ENCODE measurements at regions of chr1 and their contacts with region 1.

Region 1: DNA sequence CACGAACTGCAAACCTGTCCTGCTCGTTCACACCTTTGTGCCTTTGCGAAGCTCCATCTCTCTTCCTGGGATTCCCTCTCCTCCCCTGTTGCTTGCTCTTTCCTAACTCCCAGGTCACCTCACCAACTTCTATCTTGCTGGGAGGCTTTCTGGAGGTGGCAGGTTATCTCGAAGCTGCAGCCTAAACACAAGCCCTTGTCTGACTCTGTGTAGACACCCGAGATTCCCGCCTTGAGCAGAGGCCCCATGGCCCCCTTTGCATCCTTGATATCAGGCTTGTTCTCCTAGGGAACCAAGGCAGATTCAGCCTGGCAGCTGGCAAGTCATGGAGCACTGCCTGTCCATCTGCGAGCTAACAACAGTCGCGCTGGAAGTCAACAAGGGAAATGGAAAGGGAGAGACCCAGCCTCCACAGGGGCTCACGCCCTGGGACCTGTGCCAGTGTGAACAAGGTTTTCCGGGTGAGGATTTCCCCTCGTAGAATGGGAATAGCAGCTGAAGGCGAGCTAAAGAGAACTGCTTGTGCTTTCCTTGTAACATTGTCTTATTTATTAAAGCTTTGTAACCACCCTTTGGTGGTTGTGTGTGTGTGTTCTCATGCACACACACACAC is 109.5 kb upstream of the JUN start:
- DNase-seq: peak in 1 of 2 donors; percentile 50
- H3K4me3 ChIP-seq: no peak overlapping the region
- H3K27ac ChIP-seq: no peak overlapping the region
- H3K4me1 ChIP-seq: peaks cover 0 to 35% (median 17%) of the 10 kb centered on the region in 4 donors
- H3K27me3 ChIP-seq: no peaks in the 10 kb centered on the region
- CTCF ChIP-seq: no peak

Region 2: GRCh38 chr1:58442114-58442513 is 451.2 kb before region 1 on chr1:
- intact Hi-C with region 1: no loop called
- DNase-seq: no peak
- H3K4me3 ChIP-seq: no peak overlapping the region
- H3K27ac ChIP-seq: no peak overlapping the region
- H3K4me1 ChIP-seq: no peaks in the 10 kb centered on the region
- H3K27me3 ChIP-seq: no peaks in the 10 kb centered on the region
- CTCF ChIP-seq: no peak

Region 3: DNA sequence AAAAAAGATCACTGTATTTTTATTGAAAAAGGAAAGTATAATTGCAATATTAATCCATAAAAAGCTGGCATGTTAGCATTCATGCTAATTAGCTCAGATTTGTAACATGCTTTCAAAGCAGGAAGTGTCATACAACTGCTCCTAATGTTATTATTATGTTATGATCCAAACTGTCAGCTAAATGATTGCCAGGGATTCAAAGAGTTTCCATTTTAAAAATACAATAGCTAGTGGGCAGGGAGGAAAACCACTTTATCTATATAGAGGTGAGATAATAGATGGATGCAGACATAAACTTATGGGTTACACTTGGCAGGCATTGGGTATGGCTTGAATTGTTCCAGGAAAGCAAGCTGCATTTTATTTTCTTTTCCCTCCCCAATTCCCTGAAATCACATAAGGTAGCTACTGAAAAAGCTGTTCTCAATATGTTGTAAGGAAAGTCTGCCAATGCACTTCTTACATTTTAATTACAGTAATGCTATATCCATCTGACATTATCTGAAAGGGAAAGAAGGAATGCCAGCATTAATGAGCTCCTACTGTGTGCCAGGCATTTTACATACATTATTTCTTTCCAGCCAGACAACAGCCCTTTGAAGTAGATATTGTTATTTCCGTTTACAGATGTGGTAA is 183.7 kb before region 1 on chr1:
- intact Hi-C with region 1: no loop called
- DNase-seq: no peak
- H3K4me3 ChIP-seq: no peak overlapping the region
- H3K27ac ChIP-seq: no peak overlapping the region
- H3K4me1 ChIP-seq: no peaks in the 10 kb centered on the region
- H3K27me3 ChIP-seq: no peaks in the 10 kb centered on the region
- CTCF ChIP-seq: no peak

Region 4: GRCh38 chr1:58816072-58816746 is 77.2 kb before region 1 on chr1:
- intact Hi-C with region 1: loop called (anchors 5 kb)
- DNase-seq: peak; percentile 86 to 95
- H3K4me3 ChIP-seq: peak overlapping the region; percentile 62 to 69
- H3K27ac ChIP-seq: peak overlapping the region; percentile 84 to 86
- H3K4me1 ChIP-seq: peaks cover 0 to 35% (median 12%) of the 10 kb centered on the region in 4 donors
- H3K27me3 ChIP-seq: no peaks in the 10 kb centered on the region
- CTCF ChIP-seq: no peak

Region 5: DNA sequence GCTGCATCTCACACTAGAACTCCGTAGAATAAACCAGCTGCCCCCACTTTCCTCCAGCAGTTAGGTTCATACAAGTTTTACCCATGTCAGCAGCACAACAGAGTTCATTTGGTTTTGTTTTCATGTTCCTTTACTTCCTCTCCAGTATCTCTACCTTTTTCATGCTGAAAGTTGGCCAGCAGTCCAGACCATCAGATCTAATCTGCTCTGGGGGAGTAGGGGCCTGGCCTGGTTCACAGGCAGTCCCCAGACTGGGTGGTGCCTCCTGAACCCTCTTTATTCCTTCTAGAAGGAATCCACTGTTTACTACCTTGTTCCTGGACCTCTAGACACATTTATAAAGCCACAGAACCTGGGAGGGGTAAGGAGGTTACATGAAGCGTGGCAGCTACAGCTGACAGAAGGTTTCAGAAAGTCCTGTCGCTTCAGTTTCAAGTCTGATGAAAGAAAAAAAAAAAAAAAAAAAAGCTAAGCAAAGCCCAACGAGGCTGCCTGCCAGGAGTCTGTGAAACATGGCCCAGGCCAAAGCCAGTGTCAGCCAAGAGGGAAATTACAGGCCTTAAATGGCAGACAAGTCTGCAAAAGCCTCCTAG is 75.1 kb after region 1 on chr1:
- intact Hi-C with region 1: no loop called
- DNase-seq: peak; percentile 89 to 94
- H3K4me3 ChIP-seq: no peak overlapping the region
- H3K27ac ChIP-seq: peak overlapping the region; percentile 82 to 85
- H3K4me1 ChIP-seq: peaks cover 0 to 16% (median 8%) of the 10 kb centered on the region in 4 donors
- H3K27me3 ChIP-seq: no peaks in the 10 kb centered on the region
- CTCF ChIP-seq: peak in 1 of 2 experiments; percentile 32

Region 6: DNA sequence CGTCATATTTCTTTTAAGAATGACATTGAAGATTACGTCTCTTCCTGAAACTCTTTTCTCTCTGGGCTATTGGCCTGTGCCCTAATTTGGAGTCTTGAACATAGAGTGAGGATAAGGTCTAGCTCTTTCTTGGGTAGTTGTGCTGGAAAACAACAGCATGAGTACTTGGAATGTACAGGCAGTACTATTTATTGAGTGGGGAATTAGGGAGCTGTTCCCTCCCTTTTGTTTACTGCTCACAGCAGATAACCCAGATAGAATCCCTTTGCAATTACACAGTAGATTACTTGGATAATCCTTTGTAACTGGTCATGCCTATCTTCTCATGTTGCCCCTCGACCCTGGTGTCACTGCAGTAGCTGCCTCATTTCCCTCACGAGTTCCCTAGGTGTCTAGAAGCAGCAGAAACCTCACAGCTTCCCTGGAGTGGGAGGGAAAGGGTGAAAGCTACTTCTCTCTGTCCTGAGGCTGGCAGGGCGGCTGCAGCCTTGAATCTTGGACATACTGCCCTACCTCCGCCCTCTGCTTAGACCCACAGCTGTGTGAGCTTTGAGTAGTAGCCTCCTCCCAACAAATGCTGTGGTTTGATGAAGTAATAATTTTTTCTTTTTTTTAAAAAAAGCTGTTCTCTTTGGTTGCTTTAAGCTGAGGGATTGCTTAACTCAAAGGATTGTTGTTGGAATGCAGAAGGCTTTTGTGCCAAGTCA is 474.1 kb after region 1 on chr1:
- intact Hi-C with region 1: no loop called
- DNase-seq: peak; percentile 81 to 85
- H3K4me3 ChIP-seq: no peak overlapping the region
- H3K27ac ChIP-seq: peak overlapping the region; percentile 70 to 75
- H3K4me1 ChIP-seq: peaks cover 0 to 26% (median 18%) of the 10 kb centered on the region in 4 donors
- H3K27me3 ChIP-seq: no peaks in the 10 kb centered on the region
- CTCF ChIP-seq: no peak

Measured in tibial artery (tissue), 4 donors.